Sigmoid colon (tissue), 7 donors: ENCODE measurements at regions of chr4 and their contacts with region 1.

Region 1: DNA sequence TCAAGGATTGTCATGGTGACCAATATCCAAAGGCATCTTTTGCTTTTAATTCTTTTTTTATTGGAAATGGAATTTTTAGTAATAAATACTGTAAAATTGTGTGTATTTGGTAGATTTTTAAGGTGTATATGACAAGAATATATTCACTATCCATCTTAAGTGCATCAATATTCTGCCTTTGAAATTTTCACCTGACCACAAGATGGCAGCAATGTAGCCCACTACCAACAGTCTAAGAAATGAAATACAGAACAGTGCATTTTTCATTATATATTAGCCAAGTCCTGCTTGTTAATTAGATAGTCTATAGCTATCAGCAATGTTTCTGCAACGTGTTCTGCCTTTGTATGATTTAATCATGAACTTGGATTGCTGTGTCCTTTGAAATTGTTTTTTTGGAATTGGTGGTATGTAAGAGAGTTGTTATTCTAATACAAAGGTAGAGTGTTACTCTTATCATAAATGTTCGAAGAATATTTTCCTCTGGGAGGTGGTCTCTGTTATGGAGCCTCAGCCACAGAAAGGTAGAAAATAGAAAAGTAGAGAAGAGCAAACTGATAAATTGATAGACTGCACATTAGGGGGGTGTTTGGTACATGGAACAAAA is 38.2 kb downstream of the HPGDS start:
- DNase-seq: no peak
- H3K4me3 ChIP-seq: no peak overlapping the region
- H3K27ac ChIP-seq: no peak overlapping the region
- H3K4me1 ChIP-seq: no peaks in the 10 kb centered on the region
- H3K27me3 ChIP-seq: no peaks in the 10 kb centered on the region
- CTCF ChIP-seq: peak in 3 of 4 experiments; percentile 14 to 39 (median 21)
- EP300 ChIP-seq: no peak
- POLR2A ChIP-seq: no peak

Region 2: GRCh38 chr4:94228493-94229216 is 75.8 kb before region 1 on chr4:
- intact Hi-C with region 1: no loop called
- DNase-seq: no peak
- H3K4me3 ChIP-seq: no peak overlapping the region
- H3K27ac ChIP-seq: no peak overlapping the region
- H3K4me1 ChIP-seq: no peaks in the 10 kb centered on the region
- H3K27me3 ChIP-seq: no peaks in the 10 kb centered on the region
- CTCF ChIP-seq: no peak
- EP300 ChIP-seq: no peak
- POLR2A ChIP-seq: no peak

Region 3: DNA sequence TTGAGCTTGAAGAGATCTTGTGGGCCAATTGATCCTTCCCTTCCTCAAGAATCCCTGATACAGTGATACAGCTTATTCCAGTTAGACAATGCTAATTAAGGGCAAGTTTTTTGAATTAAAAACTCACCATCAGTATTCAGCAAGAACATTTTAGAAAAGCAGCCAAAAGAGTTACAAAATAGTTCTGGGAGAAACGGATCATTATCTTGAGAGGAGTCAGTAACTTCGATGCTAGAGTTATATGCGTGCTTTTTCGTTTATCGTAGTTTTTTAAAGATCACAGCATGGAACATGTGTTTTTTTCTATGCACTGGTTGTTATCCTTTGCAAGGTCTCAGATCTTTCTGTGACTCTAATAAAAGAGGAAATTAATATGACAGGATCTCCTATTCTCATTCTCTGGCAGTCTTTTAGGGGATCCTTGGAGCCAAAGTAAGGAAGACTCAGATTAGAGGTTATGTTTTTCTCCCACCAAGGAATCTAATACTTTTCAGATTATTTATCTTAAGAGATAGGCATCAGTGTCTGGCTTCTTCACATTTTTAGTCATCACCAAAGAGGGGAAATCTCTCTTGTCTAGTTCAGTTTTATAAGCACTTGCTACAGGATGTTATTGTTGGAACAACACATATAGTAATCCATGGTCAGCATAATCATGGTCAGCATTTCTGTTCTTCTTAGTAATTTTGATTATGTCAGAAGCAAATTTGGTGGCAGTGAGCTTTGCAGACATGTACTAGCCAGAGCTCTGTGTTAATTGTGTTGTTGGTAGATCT is 257.0 kb after region 1 on chr4:
- intact Hi-C with region 1: no loop called
- DNase-seq: no peak
- H3K4me3 ChIP-seq: no peak overlapping the region
- H3K27ac ChIP-seq: peak overlapping the region in 3 of 4 donors; percentile 7 to 23 (median 10)
- H3K4me1 ChIP-seq: peaks cover 0 to 66% (median 34%) of the 10 kb centered on the region in 4 donors
- H3K27me3 ChIP-seq: no peaks in the 10 kb centered on the region
- CTCF ChIP-seq: no peak
- EP300 ChIP-seq: no peak
- POLR2A ChIP-seq: no peak

Region 4: DNA sequence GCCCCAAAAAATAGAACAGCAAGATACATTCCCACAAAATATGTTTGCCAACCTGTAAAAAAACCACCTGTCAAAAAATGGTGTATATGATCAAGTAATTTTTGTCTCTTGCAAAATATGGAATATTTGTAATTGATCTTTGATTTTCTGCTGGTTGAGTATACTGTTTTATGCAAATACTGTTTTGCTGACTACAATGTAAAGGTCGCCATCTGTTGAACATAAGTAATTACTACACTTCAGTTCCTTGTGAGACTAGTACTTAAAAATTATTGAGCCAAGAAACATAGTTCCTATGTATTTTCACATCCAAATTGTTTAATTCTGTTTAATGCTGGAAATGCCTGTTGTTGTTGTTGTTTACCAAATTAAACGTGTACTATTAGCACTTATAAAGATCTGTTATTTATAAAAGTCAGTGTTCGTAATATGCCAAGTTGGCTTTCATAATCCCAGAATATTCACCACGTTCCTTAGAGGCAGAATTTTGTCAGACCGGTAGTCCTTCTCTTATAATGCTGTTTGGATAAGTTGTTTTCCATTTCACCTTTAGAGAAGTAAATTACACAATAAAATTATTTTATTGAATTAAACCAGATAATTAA is 291.5 kb after region 1 on chr4:
- intact Hi-C with region 1: loop called (anchors 10 kb)
- DNase-seq: no peak
- H3K4me3 ChIP-seq: no peak overlapping the region
- H3K27ac ChIP-seq: no peak overlapping the region
- H3K4me1 ChIP-seq: peaks cover 0 to 6% (median 0%) of the 10 kb centered on the region in 4 donors
- H3K27me3 ChIP-seq: no peaks in the 10 kb centered on the region
- CTCF ChIP-seq: peak; percentile 38 to 68 (median 52)
- EP300 ChIP-seq: no peak
- POLR2A ChIP-seq: no peak

Region 5: GRCh38 chr4:95124906-95125504 is 820.5 kb after region 1 on chr4:
- intact Hi-C with region 1: loop called (anchors 10 kb)
- DNase-seq: no peak
- H3K4me3 ChIP-seq: no peak overlapping the region
- H3K27ac ChIP-seq: no peak overlapping the region
- H3K4me1 ChIP-seq: no peaks in the 10 kb centered on the region
- H3K27me3 ChIP-seq: no peaks in the 10 kb centered on the region
- CTCF ChIP-seq: peak in 3 of 4 experiments; percentile 7 to 19 (median 8)
- EP300 ChIP-seq: no peak
- POLR2A ChIP-seq: no peak